ENCODE measurements at regions of chr1 and their contacts with region 1.

Region 1: DNA sequence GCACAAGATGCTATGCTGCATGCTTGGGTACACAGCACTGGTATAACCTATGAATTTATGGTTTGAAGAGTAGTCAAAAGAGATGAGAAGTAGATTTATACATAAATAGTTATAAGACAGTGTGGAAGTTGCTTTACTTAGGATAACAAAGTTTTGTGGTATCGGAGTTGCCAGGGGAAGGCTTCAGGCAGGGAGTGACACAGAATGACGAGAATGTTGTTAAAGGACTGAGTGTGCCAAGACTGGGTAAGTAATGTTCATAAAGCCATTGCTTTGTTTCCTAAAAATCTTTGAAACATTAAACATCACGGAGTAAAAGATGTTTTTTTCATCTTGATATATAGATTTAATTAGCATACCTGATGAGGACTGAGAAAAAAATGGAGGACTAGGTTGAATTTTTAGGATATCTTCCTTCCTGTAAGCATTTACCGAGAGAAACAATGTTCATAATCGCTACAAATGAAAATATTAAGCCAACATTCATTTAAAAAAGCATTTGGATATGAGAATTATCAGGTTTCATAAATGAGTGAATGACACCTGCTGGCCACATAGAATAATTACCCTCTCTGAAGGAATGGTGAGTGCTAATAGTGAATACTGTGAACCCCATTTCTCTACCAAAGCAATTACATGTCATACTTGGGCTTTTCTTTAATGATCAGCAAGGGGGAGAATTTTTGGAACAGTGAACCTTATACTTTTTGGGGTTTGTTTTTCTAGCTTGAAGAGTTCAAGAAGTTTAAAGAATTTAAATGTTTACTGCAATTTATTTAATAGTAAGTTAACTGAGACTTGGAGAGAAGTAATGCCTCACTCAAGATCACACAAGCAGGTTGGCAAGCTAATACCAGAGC is 28.4 kb downstream of the EXTL2 start:
- DNase-seq: peak; percentile 31 to 48 (median 38)
- ATAC-seq: peak; percentile 84
- H3K4me3 ChIP-seq: no peak overlapping the region
- H3K27ac ChIP-seq: no peak overlapping the region
- H3K4me1 ChIP-seq: no peaks in the 10 kb centered on the region
- H3K27me3 ChIP-seq: no peaks in the 10 kb centered on the region
- CTCF ChIP-seq: peak; percentile 39 to 77 (median 58); a peak in 4 of 6 replicates
- EP300 ChIP-seq: no peak
- POLR2A ChIP-seq: no peak
- RAD21 ChIP-seq: peak; percentile 94

Region 2: GRCh38 chr1:99808391-99809115 is 1057.7 kb before region 1 on chr1:
- CTCF ChIA-PET with region 1: interaction called, 10 read pairs
- POLR2A ChIA-PET with region 1: no interaction called
- in situ Hi-C with region 1: loop called (anchors 10 kb)
- intact Hi-C with region 1: loop called (anchors 1 kb)
- DNase-seq: peak; percentile 74 to 93 (median 82)
- ATAC-seq: peak; percentile 95
- H3K4me3 ChIP-seq: no peak overlapping the region
- H3K27ac ChIP-seq: peak overlapping the region; percentile 69
- H3K4me1 ChIP-seq: peaks cover 0 to 11% of the 10 kb centered on the region in 2 experiments; a peak in 2 of 5 replicates
- H3K27me3 ChIP-seq: no peaks in the 10 kb centered on the region
- CTCF ChIP-seq: peak; percentile 54 to 84 (median 70)
- EP300 ChIP-seq: peak; percentile 52
- POLR2A ChIP-seq: no peak
- RAD21 ChIP-seq: peak; percentile 94 to 95

Region 3: GRCh38 chr1:100494393-100495084 is 371.7 kb before region 1 on chr1:
- CTCF ChIA-PET with region 1: no interaction called
- POLR2A ChIA-PET with region 1: no interaction called
- in situ Hi-C with region 1: loop called (anchors 25 kb)
- intact Hi-C with region 1: no loop called
- DNase-seq: no peak
- ATAC-seq: no peak
- H3K4me3 ChIP-seq: no peak overlapping the region
- H3K27ac ChIP-seq: no peak overlapping the region
- H3K4me1 ChIP-seq: no peaks in the 10 kb centered on the region; a peak in 1 of 5 replicates
- H3K27me3 ChIP-seq: no peaks in the 10 kb centered on the region
- CTCF ChIP-seq: no peak
- EP300 ChIP-seq: no peak
- POLR2A ChIP-seq: no peak
- RAD21 ChIP-seq: no peak

Region 4: DNA sequence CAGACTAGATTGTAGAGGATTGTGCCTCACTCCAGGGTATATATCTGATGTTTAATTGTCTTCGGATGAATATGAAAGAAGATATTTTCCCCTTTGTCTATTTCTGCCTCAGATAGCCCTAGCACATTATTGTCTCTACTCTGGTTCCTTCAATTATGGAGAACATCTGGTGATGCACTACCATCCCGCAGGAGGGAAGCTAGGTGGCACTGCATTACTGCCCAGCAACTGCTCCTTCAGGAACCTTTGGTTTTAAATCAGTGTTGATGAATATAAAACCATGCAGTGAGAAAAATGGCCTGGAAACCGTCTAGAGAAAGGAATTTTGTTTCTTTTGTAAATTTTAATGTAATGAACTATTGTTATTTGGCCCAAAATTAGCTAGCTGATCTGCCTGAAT is 259.8 kb before region 1 on chr1:
- CTCF ChIA-PET with region 1: interaction called, 15 read pairs
- POLR2A ChIA-PET with region 1: no interaction called
- in situ Hi-C with region 1: no loop called
- intact Hi-C with region 1: loop called (anchors 1 kb)
- DNase-seq: peak in 1 of 4 experiments; percentile 14
- ATAC-seq: peak; percentile 61
- H3K4me3 ChIP-seq: no peak overlapping the region
- H3K27ac ChIP-seq: no peak overlapping the region
- H3K4me1 ChIP-seq: no peaks in the 10 kb centered on the region
- H3K27me3 ChIP-seq: no peaks in the 10 kb centered on the region
- CTCF ChIP-seq: peak; percentile 42 to 67 (median 42); a peak in 4 of 6 replicates
- EP300 ChIP-seq: no peak
- POLR2A ChIP-seq: no peak
- RAD21 ChIP-seq: peak; percentile 74 to 81

Region 5: GRCh38 chr1:100834777-100835660 is 31.3 kb before region 1 on chr1:
- CTCF ChIA-PET with region 1: interaction called, 7 read pairs
- POLR2A ChIA-PET with region 1: no interaction called
- in situ Hi-C with region 1: no loop called
- intact Hi-C with region 1: loop called (anchors 2 kb)
- DNase-seq: peak; percentile 20 to 43 (median 31)
- ATAC-seq: peak; percentile 88
- H3K4me3 ChIP-seq: no peak overlapping the region
- H3K27ac ChIP-seq: no peak overlapping the region
- H3K4me1 ChIP-seq: no peaks in the 10 kb centered on the region
- H3K27me3 ChIP-seq: no peaks in the 10 kb centered on the region
- CTCF ChIP-seq: peak; percentile 56 to 68 (median 58); a peak in 5 of 6 replicates
- EP300 ChIP-seq: no peak
- POLR2A ChIP-seq: no peak
- RAD21 ChIP-seq: peak; percentile 53 to 63

Measured in K562 (cell line).